ENCODE measurements at regions of chr3 and their contacts with region 1.

Region 1: GRCh38 chr3:159852821-159853505 is 135.7 kb upstream of the IL12A start:
- DNase-seq: no peak
- H3K4me3 ChIP-seq: peak overlapping the region; percentile 44
- H3K27ac ChIP-seq: peak overlapping the region; percentile 94
- H3K27me3 ChIP-seq: no peaks in the 10 kb centered on the region
- CTCF ChIP-seq: no peak

Region 2: DNA sequence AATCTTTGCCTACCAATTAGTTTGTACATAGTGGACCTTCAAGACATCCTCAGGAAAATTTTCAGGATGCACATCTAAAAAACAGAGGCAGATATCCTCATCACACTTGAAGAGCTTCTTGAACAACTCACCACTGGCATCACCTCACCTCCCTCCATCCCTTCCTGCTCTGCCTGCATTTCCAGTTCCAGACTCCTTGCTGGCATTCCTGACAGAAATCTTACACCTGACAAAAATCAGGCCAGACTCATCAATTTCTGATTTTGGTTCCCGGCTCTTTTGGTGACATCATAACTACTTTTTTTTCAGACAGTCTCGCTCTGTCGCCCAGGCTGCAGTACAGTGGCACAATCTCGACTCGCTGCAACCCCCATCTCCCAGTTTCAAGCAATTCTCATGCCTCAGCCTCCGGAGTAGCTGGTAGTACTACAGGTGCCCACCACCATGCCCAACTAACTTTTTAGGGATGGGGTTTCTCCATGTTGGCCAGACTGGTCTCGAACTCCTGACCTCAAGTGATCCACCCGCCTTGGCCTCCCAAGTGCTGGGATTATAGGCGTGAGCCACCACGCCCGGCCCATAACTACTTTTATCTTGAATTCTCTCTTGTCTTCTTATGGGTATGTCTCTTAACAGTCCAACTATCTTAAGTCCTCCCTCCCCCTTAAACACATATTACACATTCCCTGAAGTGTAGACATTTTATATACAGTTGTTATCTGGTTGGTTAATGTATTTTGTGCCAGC is 80.9 kb before region 1 on chr3:
- CTCF ChIA-PET with region 1: no interaction called
- POLR2A ChIA-PET with region 1: no interaction called
- DNase-seq: no peak
- H3K4me3 ChIP-seq: no peak overlapping the region
- H3K27ac ChIP-seq: no peak overlapping the region
- H3K27me3 ChIP-seq: no peaks in the 10 kb centered on the region
- CTCF ChIP-seq: no peak

Region 3: GRCh38 chr3:159872374-159873109 is 19.6 kb after region 1 on chr3:
- CTCF ChIA-PET with region 1: interaction called, 11 read pairs
- POLR2A ChIA-PET with region 1: interaction called, 6 read pairs
- DNase-seq: peak; percentile 74
- H3K4me3 ChIP-seq: no peak overlapping the region
- H3K27ac ChIP-seq: peak overlapping the region; percentile 71
- H3K27me3 ChIP-seq: no peaks in the 10 kb centered on the region
- CTCF ChIP-seq: peak; percentile 44